PC-3 (cell line): ENCODE measurements at regions of chr17 and their contacts with region 1.

Region 1: GRCh38 chr17:15502369-15503112 is 35.1 kb upstream of the CDRT4 start:
- DNase-seq: peak; percentile 93
- ATAC-seq: peak; percentile 95
- H3K4me3 ChIP-seq: no peak overlapping the region
- H3K27ac ChIP-seq: peak overlapping the region; percentile 35
- H3K4me1 ChIP-seq: peaks cover 8% of the 10 kb centered on the region
- H3K27me3 ChIP-seq: no peaks in the 10 kb centered on the region
- CTCF ChIP-seq: peak; percentile 99

Region 2: GRCh38 chr17:15247891-15248529 is 254.5 kb before region 1 on chr17:
- CTCF ChIA-PET with region 1: interaction called, 13 read pairs
- POLR2A ChIA-PET with region 1: no interaction called
- intact Hi-C with region 1: no loop called
- DNase-seq: peak; percentile 62
- ATAC-seq: no peak
- H3K4me3 ChIP-seq: no peak overlapping the region
- H3K27ac ChIP-seq: no peak overlapping the region
- H3K4me1 ChIP-seq: no peaks in the 10 kb centered on the region
- H3K27me3 ChIP-seq: no peaks in the 10 kb centered on the region
- CTCF ChIP-seq: peak; percentile 89

Region 3: DNA sequence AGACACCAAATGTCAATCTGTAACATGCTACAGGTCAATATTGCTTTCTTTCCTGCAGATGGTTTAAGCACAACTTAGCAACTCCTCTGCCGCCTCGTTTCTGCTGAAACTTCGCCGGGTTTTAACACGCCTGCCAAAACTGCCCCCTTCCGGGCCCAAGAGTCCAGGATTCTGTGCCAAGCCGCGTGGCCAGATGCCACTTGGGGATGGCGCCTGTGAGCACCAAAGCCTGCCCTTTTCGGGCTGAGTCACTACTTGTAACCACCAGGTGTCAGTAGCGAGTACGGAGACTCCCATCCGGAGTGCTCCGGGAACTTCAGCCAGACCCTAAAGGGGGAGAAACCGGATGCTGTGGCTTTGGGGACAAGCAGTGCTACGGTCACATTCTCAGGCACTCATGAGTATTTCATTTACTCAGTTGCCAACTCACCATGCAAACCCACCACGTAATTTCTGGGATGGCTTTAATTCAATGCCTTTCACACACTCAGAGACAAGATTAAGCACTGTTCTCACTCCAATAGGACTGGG is 245.2 kb before region 1 on chr17:
- CTCF ChIA-PET with region 1: interaction called, 15 read pairs
- POLR2A ChIA-PET with region 1: no interaction called
- intact Hi-C with region 1: loop called (anchors 1 kb)
- DNase-seq: peak; percentile 99
- ATAC-seq: peak; percentile 42
- H3K4me3 ChIP-seq: peak overlapping the region; percentile 90
- H3K27ac ChIP-seq: peak overlapping the region; percentile 83
- H3K4me1 ChIP-seq: peaks cover 40% of the 10 kb centered on the region
- H3K27me3 ChIP-seq: no peaks in the 10 kb centered on the region
- CTCF ChIP-seq: peak; percentile 98

Region 4: DNA sequence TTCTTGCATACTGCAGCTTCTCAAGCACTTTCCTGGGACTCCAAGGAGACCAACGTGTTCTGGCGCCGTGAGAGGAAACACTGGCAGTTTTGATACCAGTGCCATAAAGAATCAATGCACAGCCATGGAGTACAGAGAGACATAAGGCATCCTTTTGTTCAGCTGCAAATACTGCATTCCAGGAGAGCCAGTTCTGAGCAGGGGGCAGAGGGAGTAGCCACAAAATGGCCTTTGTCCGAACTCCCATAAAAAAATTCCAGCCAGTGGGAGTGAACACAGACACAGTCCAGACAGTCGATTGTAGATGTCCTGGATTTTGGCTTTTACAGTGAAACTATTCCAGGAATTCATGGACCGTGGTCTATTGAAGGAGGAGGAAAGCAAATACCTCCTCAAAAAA is 124.9 kb before region 1 on chr17:
- CTCF ChIA-PET with region 1: interaction called, 6 read pairs
- POLR2A ChIA-PET with region 1: no interaction called
- intact Hi-C with region 1: loop called (anchors 5 kb)
- DNase-seq: peak; percentile 97
- ATAC-seq: peak; percentile 74
- H3K4me3 ChIP-seq: peak overlapping the region; percentile 47
- H3K27ac ChIP-seq: peak overlapping the region; percentile 93
- H3K4me1 ChIP-seq: peaks cover 44% of the 10 kb centered on the region
- H3K27me3 ChIP-seq: no peaks in the 10 kb centered on the region
- CTCF ChIP-seq: no peak

Region 5: GRCh38 chr17:15398736-15399331 is 103.7 kb before region 1 on chr17:
- CTCF ChIA-PET with region 1: interaction called, 3 read pairs
- POLR2A ChIA-PET with region 1: no interaction called
- intact Hi-C with region 1: loop called (anchors 5 kb)
- DNase-seq: peak; percentile 93
- ATAC-seq: peak; percentile 94
- H3K4me3 ChIP-seq: peak overlapping the region; percentile 17; the same call in 1 of the 2 replicates
- H3K27ac ChIP-seq: peak overlapping the region; percentile 85
- H3K4me1 ChIP-seq: peaks cover 25% of the 10 kb centered on the region
- H3K27me3 ChIP-seq: no peaks in the 10 kb centered on the region
- CTCF ChIP-seq: no peak

Region 6: GRCh38 chr17:15422392-15422957 is 80.1 kb before region 1 on chr17:
- CTCF ChIA-PET with region 1: no interaction called
- POLR2A ChIA-PET with region 1: no interaction called
- intact Hi-C with region 1: no loop called
- DNase-seq: no peak
- ATAC-seq: no peak
- H3K4me3 ChIP-seq: no peak overlapping the region
- H3K27ac ChIP-seq: no peak overlapping the region
- H3K4me1 ChIP-seq: no peaks in the 10 kb centered on the region
- H3K27me3 ChIP-seq: no peaks in the 10 kb centered on the region
- CTCF ChIP-seq: no peak